IMR-90 (cell line): ENCODE measurements at regions of chr20 and their contacts with region 1.

Region 1: DNA sequence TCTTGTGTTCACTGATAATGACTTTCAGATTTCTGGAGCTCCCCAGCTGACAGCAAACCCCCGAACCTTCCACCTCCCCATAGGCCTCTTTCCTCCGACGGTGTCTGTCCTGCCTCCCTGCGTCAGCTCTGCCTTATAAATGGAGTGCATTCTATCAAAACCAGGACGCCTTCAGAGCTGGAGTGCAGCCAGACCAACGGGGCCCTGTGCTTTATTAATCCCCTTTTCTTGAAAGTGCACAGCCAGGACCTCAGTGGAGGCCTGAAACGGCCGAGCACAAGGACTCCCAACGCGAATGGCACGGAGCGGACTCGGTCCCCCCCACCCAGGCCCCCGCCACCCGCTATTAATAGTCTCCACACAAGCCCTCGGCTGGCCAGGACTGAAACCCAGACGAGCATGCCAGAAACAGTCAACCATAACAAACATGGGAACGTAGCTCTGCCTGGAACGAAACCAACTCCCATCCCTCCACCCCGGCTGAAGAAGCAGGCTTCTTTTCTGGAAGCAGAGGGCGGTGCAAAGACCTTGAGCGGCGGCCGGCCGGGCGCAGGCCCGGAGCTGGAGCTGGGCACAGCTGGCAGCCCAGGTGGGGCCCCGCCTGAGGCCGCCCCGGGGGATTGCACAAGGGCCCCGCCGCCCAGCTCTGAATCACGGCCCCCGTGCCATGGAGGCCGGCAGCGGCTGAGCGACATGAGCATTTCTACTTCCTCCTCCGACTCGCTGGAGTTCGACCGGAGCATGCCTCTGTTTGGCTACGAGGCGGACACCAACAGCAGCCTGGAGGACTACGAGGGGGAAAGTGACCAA is 42.3 kb upstream of the NAA20 start:
- DNase-seq: peak; percentile 97
- ATAC-seq: peak; percentile 66
- H3K4me3 ChIP-seq: peak overlapping the region; percentile 71
- H3K27ac ChIP-seq: peak overlapping the region; percentile 92
- H3K4me1 ChIP-seq: peaks cover 20% of the 10 kb centered on the region
- H3K27me3 ChIP-seq: no peaks in the 10 kb centered on the region
- CTCF ChIP-seq: no peak
- POLR2A ChIP-seq: peak; percentile 68
- RAD21 ChIP-seq: no peak; the same call in 1 of the 2 replicates

Region 2: GRCh38 chr20:19815553-19815991 is 159.3 kb before region 1 on chr20:
- CTCF ChIA-PET with region 1: no interaction called
- POLR2A ChIA-PET with region 1: interaction called, 8 read pairs
- dilution Hi-C with region 1: no loop called
- in situ Hi-C with region 1: no loop called
- intact Hi-C with region 1: loop called (anchors 10 kb)
- DNase-seq: peak; percentile 99
- ATAC-seq: peak; percentile 86
- H3K4me3 ChIP-seq: no peak overlapping the region
- H3K27ac ChIP-seq: peak overlapping the region; percentile 87
- H3K4me1 ChIP-seq: peaks cover 22% of the 10 kb centered on the region
- H3K27me3 ChIP-seq: no peaks in the 10 kb centered on the region
- CTCF ChIP-seq: no peak
- POLR2A ChIP-seq: peak; percentile 68; the same call in 1 of the 2 replicates
- RAD21 ChIP-seq: peak; percentile 25; the same call in 1 of the 2 replicates

Region 3: DNA sequence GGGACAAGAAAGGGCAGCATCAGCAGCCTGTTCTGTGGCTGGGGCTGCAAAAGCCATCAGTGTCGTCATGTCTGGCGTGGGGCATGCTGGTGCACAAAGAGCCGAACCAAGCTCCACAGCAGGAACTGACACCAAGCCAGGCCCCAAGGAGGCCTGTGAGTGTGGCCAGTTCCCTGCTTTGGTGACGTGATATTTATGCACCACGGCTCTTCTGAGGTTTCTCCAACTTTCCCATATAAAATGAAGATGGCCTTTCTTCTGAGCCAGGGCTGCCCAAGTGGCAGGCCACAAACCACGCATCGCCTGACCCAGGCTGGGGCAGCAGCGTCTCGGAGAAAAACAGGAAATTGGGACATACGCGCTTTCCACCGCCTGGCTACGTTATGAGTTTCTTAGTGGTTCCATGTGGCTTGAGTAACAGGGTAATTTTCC is 106.9 kb before region 1 on chr20:
- CTCF ChIA-PET with region 1: no interaction called
- POLR2A ChIA-PET with region 1: no interaction called
- dilution Hi-C with region 1: no loop called
- in situ Hi-C with region 1: no loop called
- intact Hi-C with region 1: no loop called
- DNase-seq: no peak
- ATAC-seq: no peak
- H3K4me3 ChIP-seq: no peak overlapping the region
- H3K27ac ChIP-seq: 0 out of 2 replicates have a peak overlapping the region, but pooled peaks have one; percentile 15
- H3K4me1 ChIP-seq: peaks cover 6% of the 10 kb centered on the region
- H3K27me3 ChIP-seq: no peaks in the 10 kb centered on the region
- CTCF ChIP-seq: no peak
- POLR2A ChIP-seq: no peak
- RAD21 ChIP-seq: no peak

Region 4: GRCh38 chr20:19880256-19881079 is 94.4 kb before region 1 on chr20:
- CTCF ChIA-PET with region 1: no interaction called
- POLR2A ChIA-PET with region 1: interaction called, 10 read pairs
- dilution Hi-C with region 1: no loop called
- in situ Hi-C with region 1: no loop called
- intact Hi-C with region 1: no loop called
- DNase-seq: peak; percentile 89
- ATAC-seq: peak; percentile 63
- H3K4me3 ChIP-seq: peak overlapping the region; percentile 5; the same call in 1 of the 2 replicates
- H3K27ac ChIP-seq: peak overlapping the region; percentile 100
- H3K4me1 ChIP-seq: peaks cover 28% of the 10 kb centered on the region
- H3K27me3 ChIP-seq: no peaks in the 10 kb centered on the region
- CTCF ChIP-seq: no peak
- POLR2A ChIP-seq: peak; percentile 51; the same call in 1 of the 2 replicates
- RAD21 ChIP-seq: no peak

Region 5: DNA sequence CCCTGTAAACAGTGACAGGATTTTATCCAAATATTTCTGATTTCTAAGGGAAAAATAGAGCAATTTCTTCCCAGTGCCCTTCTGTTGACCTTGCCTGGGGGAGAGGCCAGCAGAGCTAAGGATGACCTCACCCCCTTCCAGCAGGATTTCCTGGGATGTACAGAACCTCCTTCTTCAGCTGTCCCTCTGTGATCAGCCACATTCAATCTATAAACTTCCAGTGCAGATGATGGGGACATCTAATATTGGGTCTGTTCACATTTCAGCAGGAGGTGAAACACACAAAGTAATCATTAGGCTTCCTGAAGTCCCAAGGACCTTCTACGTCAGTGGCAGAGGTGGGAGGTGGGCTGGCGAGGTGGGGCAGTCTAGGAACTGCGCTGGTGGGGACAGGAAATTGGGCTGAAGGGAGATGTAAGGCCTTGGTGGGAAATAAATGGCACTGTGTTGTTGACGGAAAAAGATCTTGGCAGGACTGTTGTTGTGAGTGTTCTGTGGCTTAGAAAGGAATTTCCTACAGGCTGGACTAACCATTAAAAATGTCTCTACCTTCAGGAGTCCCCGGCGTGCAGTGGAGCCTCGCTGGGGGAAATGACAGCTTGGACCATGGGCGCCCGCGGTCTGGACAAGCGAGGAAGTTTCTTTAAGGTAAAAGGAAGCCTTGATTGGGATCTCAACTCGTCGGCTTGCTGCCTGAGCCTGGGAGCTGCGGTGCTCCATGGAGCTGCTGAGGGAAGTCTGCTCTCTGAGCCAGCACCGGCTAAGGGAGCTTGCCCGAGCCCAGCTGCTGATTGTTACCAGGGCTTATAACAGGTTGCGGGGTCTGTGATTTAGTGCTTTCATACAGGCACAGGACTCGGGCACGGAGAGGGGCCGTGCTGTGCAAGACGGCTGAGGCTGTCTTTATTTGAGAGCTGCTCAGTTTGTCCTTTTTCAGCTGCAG is 85.5 kb before region 1 on chr20:
- CTCF ChIA-PET with region 1: no interaction called
- POLR2A ChIA-PET with region 1: interaction called, 4 read pairs
- dilution Hi-C with region 1: no loop called
- in situ Hi-C with region 1: no loop called
- intact Hi-C with region 1: loop called (anchors 2 kb)
- DNase-seq: peak; percentile 76
- ATAC-seq: peak; percentile 46
- H3K4me3 ChIP-seq: peak overlapping the region; percentile 57
- H3K27ac ChIP-seq: peak overlapping the region; percentile 100
- H3K4me1 ChIP-seq: peaks cover 33% of the 10 kb centered on the region
- H3K27me3 ChIP-seq: no peaks in the 10 kb centered on the region
- CTCF ChIP-seq: no peak
- POLR2A ChIP-seq: no peak
- RAD21 ChIP-seq: no peak

Region 6: DNA sequence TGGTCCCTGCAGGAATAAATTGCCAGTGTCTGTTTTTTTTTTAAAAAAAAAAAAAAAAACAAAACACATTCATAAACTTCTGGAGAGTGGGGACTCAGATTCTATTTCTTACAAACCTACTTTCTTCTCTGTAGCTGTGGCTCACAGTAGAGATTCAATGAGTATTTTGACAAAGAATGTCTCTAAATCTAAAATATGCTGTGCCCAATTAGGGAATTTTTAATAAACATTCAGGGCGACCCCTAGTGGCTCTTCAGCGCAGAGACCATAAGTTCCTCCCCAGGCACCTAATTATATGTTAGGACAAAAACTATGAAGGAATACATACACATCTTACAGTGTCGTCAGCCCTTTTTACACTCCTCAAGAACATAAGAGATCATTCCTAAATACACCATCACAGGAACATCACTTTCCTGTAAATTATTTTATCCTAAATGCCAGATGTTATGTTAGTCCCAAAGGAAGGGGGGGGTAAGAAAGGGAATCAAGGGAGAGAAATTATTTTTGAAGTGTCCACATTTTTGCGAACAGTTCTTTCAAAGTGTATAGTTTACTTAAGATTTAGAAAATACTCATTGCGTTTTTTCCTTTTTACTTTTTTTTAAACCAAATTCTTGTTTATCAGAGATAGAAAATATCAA is 20.5 kb after region 1 on chr20:
- CTCF ChIA-PET with region 1: interaction called, 6 read pairs
- POLR2A ChIA-PET with region 1: interaction called, 10 read pairs
- dilution Hi-C with region 1: no loop called
- in situ Hi-C with region 1: no loop called
- intact Hi-C with region 1: loop called (anchors 1 kb)
- DNase-seq: peak; percentile 64
- ATAC-seq: peak; percentile 21
- H3K4me3 ChIP-seq: no peak overlapping the region
- H3K27ac ChIP-seq: peak overlapping the region; percentile 79; the same call in 1 of the 2 replicates
- H3K4me1 ChIP-seq: peaks cover 28% of the 10 kb centered on the region
- H3K27me3 ChIP-seq: no peaks in the 10 kb centered on the region
- CTCF ChIP-seq: peak; percentile 81
- POLR2A ChIP-seq: no peak
- RAD21 ChIP-seq: peak; percentile 70